ENCODE measurements at regions of chr11 and their contacts with region 1.

Region 1: GRCh38 chr11:16605894-16606783 is 132.3 kb upstream of the C11orf58 start:
- DNase-seq: peak; percentile 83 to 93
- H3K4me3 ChIP-seq: peak overlapping the region; percentile 74
- H3K4me3 Mint-ChIP-seq: no peak overlapping the region
- H3K27ac Mint-ChIP-seq: peak overlapping the region; percentile 44
- H3K4me1 ChIP-seq: peaks cover 4% of the 10 kb centered on the region; the same call in 1 of the 2 replicates
- H3K4me1 Mint-ChIP-seq: no peaks in the 10 kb centered on the region
- H3K27me3 ChIP-seq: no peaks in the 10 kb centered on the region; the same call in 1 of the 2 replicates
- H3K27me3 Mint-ChIP-seq: no peaks in the 10 kb centered on the region
- CTCF ChIP-seq: peak; percentile 95 to 96

Region 2: GRCh38 chr11:15826826-15827225 is 779.3 kb before region 1 on chr11:
- CTCF ChIA-PET with region 1: no interaction called
- POLR2A ChIA-PET with region 1: no interaction called
- intact Hi-C with region 1: no loop called
- DNase-seq: peak; percentile 62 to 71
- H3K4me3 ChIP-seq: no peak overlapping the region
- H3K4me3 Mint-ChIP-seq: no peak overlapping the region
- H3K27ac Mint-ChIP-seq: no peak overlapping the region
- H3K4me1 ChIP-seq: no peaks in the 10 kb centered on the region
- H3K4me1 Mint-ChIP-seq: no peaks in the 10 kb centered on the region
- H3K27me3 ChIP-seq: no peaks in the 10 kb centered on the region
- H3K27me3 Mint-ChIP-seq: peaks cover 3% of the 10 kb centered on the region
- CTCF ChIP-seq: peak; percentile 71 to 77

Region 3: GRCh38 chr11:16043617-16044016 is 562.5 kb before region 1 on chr11:
- CTCF ChIA-PET with region 1: no interaction called
- POLR2A ChIA-PET with region 1: no interaction called
- intact Hi-C with region 1: loop called (anchors 5 kb)
- DNase-seq: no peak
- H3K4me3 ChIP-seq: no peak overlapping the region
- H3K4me3 Mint-ChIP-seq: no peak overlapping the region
- H3K27ac Mint-ChIP-seq: no peak overlapping the region
- H3K4me1 ChIP-seq: no peaks in the 10 kb centered on the region
- H3K4me1 Mint-ChIP-seq: no peaks in the 10 kb centered on the region
- H3K27me3 ChIP-seq: no peaks in the 10 kb centered on the region
- H3K27me3 Mint-ChIP-seq: no peaks in the 10 kb centered on the region
- CTCF ChIP-seq: no peak

Region 4: GRCh38 chr11:16191212-16191867 is 414.8 kb before region 1 on chr11:
- CTCF ChIA-PET with region 1: no interaction called
- POLR2A ChIA-PET with region 1: interaction called, 6 read pairs
- intact Hi-C with region 1: loop called (anchors 1 kb)
- DNase-seq: no peak
- H3K4me3 ChIP-seq: no peak overlapping the region
- H3K4me3 Mint-ChIP-seq: no peak overlapping the region
- H3K27ac Mint-ChIP-seq: peak overlapping the region; percentile 57
- H3K4me1 ChIP-seq: peaks cover 48% of the 10 kb centered on the region
- H3K4me1 Mint-ChIP-seq: peaks cover 43% of the 10 kb centered on the region
- H3K27me3 ChIP-seq: no peaks in the 10 kb centered on the region
- H3K27me3 Mint-ChIP-seq: no peaks in the 10 kb centered on the region
- CTCF ChIP-seq: peak; percentile 34 to 45

Region 5: DNA sequence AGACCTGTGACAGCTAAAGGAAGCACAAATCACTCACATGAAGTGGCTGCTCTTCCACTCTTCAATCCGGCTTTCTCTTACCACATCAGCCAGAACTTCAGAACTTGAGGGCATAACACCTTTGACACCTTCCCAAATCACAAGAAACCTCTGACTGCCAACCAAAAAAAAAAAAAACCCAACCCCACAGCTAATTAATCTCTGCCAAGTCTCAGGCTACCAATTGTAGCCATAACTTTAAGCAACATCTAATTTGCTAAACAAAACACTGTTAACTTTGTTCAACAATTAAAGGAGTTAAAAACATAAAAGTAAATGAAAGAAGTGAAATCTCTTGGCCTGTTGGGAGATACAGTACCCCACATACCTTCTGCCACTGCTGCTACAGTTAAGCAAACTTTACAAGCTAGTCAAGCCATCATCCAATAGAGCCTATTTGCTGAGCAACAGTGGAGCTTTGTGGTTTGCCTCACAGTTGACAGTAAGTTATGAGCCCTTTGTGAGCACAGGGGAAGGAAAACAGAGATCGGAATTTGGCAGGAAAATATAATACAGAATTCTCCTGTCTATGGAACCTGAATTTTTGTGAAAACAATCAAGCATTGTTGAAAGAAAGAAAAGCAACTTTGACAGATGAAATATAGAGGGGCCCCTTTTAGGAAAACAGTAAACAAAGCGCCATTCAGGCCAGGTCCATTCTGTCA is 249.9 kb before region 1 on chr11 and contains the start of gene SOX6:
- CTCF ChIA-PET with region 1: interaction called, 4 read pairs
- POLR2A ChIA-PET with region 1: no interaction called
- intact Hi-C with region 1: loop called (anchors 5 kb)
- DNase-seq: peak; percentile 47 to 56
- H3K4me3 ChIP-seq: no peak within 1 kb of the TSS
- H3K4me3 Mint-ChIP-seq: peak within 1 kb of the TSS; percentile 20
- H3K27ac Mint-ChIP-seq: peak within 1 kb of the TSS; percentile 48
- H3K4me1 ChIP-seq: peaks cover 29% of the 10 kb centered on the region
- H3K4me1 Mint-ChIP-seq: peaks cover 37% of the 10 kb centered on the region
- H3K27me3 ChIP-seq: no peaks in the 10 kb centered on the region
- H3K27me3 Mint-ChIP-seq: no peaks in the 10 kb centered on the region
- CTCF ChIP-seq: peak in 1 of 2 experiments; percentile 13
- total RNA-seq, gene SOX6: 10.8 and 24.0 TPM in 2 replicates

Region 6: GRCh38 chr11:16402654-16403447 is 203.3 kb before region 1 on chr11:
- CTCF ChIA-PET with region 1: no interaction called
- POLR2A ChIA-PET with region 1: no interaction called
- intact Hi-C with region 1: loop called (anchors 2 kb)
- DNase-seq: no peak
- H3K4me3 ChIP-seq: no peak overlapping the region
- H3K4me3 Mint-ChIP-seq: no peak overlapping the region
- H3K27ac Mint-ChIP-seq: no peak overlapping the region
- H3K4me1 ChIP-seq: peaks cover 30% of the 10 kb centered on the region
- H3K4me1 Mint-ChIP-seq: peaks cover 32% of the 10 kb centered on the region
- H3K27me3 ChIP-seq: no peaks in the 10 kb centered on the region
- H3K27me3 Mint-ChIP-seq: no peaks in the 10 kb centered on the region
- CTCF ChIP-seq: no peak